Ascending aorta (tissue), 2 donors: ENCODE measurements at regions of chr3 and their contacts with region 1.

Region 1: DNA sequence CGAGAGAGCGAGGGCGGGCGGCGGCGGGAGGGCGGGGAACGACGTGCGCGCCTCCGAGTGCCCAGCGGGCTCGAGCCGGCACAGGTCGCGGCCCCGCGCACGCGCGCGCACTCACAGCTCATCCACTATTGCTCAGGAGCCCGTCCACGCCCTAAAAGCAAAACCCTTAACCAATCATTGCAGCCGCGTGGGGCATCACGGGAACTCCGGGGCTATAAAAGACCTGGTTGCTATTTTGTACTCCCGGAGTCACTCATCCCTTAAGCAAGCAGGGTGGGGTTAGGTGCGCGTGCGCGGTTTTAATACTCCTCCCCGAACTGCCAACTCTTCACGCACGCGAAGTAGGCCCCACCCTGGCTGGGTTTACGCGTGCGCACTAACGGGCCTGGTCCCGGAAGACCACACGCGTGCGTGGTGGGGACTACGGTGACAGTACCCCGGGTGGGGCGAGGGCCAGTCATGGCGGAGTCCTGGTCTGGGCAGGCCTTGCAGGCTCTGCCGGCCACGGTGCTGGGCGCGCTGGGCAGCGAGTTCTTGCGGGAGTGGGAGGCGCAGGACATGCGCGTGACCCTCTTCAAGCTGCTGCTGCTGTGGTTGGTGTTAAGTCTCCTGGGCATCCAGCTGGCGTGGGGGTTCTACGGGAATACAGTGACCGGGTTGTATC is at the starts of genes RHOA and TCTA:
- DNase-seq: peak; percentile 100
- H3K4me3 ChIP-seq: peak within 1 kb of the TSS; percentile 80 to 97
- H3K27ac ChIP-seq: peak within 1 kb of the TSS; percentile 97 to 99
- H3K4me1 ChIP-seq: peaks cover 0 to 40% of the 10 kb centered on the region in 2 donors
- H3K27me3 ChIP-seq: no peaks in the 10 kb centered on the region
- CTCF ChIP-seq: no peak
- total RNA-seq, gene RHOA: 426 TPM
- total RNA-seq, gene TCTA: 51.5 TPM

Region 2: GRCh38 chr3:49339945-49340800 is 71.9 kb before region 1 on chr3 and contains the start of gene USP4:
- intact Hi-C with region 1: loop called (anchors 5 kb)
- DNase-seq: peak; percentile 63 to 94
- H3K4me3 ChIP-seq: peak within 1 kb of the TSS; percentile 75 to 85
- H3K27ac ChIP-seq: peak within 1 kb of the TSS; percentile 93 to 98
- H3K4me1 ChIP-seq: peaks cover 4 to 17% of the 10 kb centered on the region in 2 donors
- H3K27me3 ChIP-seq: no peaks in the 10 kb centered on the region
- CTCF ChIP-seq: peak; percentile 35 to 47 (median 47)
- total RNA-seq, gene USP4: 94.7 TPM

Region 3: DNA sequence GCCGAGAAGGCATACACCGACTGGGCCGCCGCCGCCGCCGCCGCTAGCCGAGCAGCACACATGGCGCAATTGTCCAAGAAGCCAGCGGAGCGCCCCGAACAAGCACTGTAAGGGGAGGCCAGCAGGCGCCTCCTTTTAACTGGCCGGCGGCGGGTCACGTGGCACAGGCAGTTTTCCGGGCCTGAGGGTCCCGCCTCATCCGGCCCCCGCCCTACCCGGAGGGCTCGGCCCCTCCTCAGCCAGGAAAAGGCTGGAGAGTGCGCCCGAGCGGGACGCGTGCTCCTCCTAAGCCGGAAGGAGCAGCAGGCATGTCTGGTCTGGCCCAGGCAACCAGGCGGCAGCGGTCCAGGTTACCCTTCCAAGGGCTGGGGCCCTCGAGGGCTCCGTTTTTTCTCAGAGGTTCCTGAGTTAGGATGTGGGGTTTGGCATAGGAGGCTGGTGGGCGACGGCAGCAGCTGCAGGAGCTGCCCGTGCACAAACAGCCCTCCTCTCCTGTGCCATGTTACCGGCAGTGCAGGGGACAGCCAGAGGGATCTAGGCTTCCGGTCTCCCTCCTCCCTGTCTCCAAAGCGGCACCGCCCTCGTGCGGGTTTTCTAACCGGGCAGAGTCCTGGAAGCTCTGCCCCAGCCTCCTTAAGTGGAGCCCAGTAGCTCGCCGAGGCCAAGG is 53.8 kb before region 1 on chr3 and contains the start of gene GPX1:
- intact Hi-C with region 1: loop called (anchors 1 kb)
- DNase-seq: peak; percentile 79 to 97
- H3K4me3 ChIP-seq: peak within 1 kb of the TSS; percentile 84 to 85
- H3K27ac ChIP-seq: peak within 1 kb of the TSS; percentile 91 to 95
- H3K4me1 ChIP-seq: peaks cover 0 to 16% of the 10 kb centered on the region in 2 donors
- H3K27me3 ChIP-seq: no peaks in the 10 kb centered on the region
- CTCF ChIP-seq: no peak
- total RNA-seq, gene GPX1: 422 TPM

Region 4: GRCh38 chr3:49428697-49429100 is 16.6 kb after region 1 on chr3:
- intact Hi-C with region 1: loop called (anchors 1 kb)
- DNase-seq: no peak
- H3K4me3 ChIP-seq: peak overlapping the region; percentile 83 to 92
- H3K27ac ChIP-seq: peak overlapping the region; percentile 91 to 93
- H3K4me1 ChIP-seq: peaks cover 0 to 7% of the 10 kb centered on the region in 2 donors
- H3K27me3 ChIP-seq: no peaks in the 10 kb centered on the region
- CTCF ChIP-seq: no peak

Region 5: GRCh38 chr3:49445381-49445780 is 33.3 kb after region 1 on chr3:
- intact Hi-C with region 1: loop called (anchors 5 kb)
- DNase-seq: no peak
- H3K4me3 ChIP-seq: no peak overlapping the region
- H3K27ac ChIP-seq: peak overlapping the region in 1 of 2 donors; percentile 9
- H3K4me1 ChIP-seq: peaks cover 0 to 11% of the 10 kb centered on the region in 2 donors
- H3K27me3 ChIP-seq: no peaks in the 10 kb centered on the region
- CTCF ChIP-seq: no peak

Region 6: DNA sequence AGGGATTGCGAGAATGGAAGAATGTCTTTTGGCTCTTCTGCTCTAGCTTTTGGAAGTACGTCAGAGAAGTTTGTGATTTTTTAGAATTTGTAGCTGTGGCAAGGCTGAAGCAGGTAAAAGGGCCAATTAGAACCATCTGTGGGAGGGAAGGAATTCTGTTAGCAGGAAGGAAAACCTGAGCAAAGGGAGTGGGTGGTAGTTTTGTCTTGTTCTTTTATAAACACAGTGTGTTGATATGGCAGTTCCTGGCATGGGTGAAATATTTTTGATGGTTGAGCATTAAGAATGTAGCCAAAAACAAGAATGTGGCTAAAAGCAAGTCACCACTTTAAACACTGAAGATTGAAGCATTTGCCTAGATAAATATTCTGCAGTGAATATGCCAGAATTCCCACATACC is 81.8 kb after region 1 on chr3:
- intact Hi-C with region 1: loop called (anchors 5 kb)
- DNase-seq: no peak
- H3K4me3 ChIP-seq: no peak overlapping the region
- H3K27ac ChIP-seq: peak overlapping the region; percentile 83 to 86
- H3K4me1 ChIP-seq: peaks cover 13 to 55% of the 10 kb centered on the region in 2 donors
- H3K27me3 ChIP-seq: no peaks in the 10 kb centered on the region
- CTCF ChIP-seq: no peak